ENCODE measurements at regions of chr17 and their contacts with region 1.

Region 1: GRCh38 chr17:8001976-8002720 is at the start of gene GUCY2D:
- DNase-seq: no peak
- H3K4me3 ChIP-seq: no peak within 1 kb of the TSS
- H3K27ac ChIP-seq: no peak within 1 kb of the TSS
- H3K4me1 ChIP-seq: peaks cover 3% of the 10 kb centered on the region; the same call in 1 of the 2 replicates
- H3K27me3 ChIP-seq: 0 out of 2 replicates have a peak, but pooled peaks cover 3% of the 10 kb centered on the region
- CTCF ChIP-seq: no peak
- total RNA-seq, gene GUCY2D: 0.79 TPM in 1 of 2 replicates, not detected in the other

Region 2: DNA sequence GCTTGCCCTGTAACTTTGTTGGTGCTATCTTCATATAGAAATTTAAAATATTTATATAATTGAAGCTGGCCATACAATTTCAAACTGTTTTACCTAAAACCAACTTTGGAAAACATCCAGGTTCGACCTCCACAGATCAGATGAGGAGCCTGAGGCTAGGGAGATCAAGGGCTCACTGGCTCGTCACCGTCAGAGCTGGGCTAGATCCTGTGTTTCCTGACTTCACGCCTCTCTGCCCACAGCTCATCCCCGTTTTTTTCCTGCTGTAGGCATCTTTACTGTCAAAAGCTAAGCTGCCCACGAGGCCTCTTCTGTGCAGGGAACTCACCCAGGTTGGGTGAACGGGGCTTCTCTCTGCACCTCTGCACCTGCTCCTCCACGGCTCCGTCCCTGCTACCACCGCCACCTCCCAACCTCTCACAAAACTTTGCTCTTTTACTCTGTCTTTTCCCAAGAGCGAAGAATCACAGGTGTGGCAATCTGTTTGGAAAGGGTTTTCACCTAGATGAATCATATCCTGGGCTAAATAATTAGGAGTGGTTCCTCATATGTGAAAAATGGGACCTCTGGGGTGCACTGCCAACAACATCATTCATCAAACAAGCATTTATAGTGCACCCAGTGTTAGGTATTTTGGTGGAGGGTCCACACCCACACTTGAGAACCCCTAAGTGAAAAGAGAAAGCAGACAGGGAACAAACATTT is 192.9 kb before region 1 on chr17:
- CTCF ChIA-PET with region 1: no interaction called
- POLR2A ChIA-PET with region 1: interaction called, 20 read pairs
- intact Hi-C with region 1: no loop called
- DNase-seq: peak; percentile 48 to 87
- H3K4me3 ChIP-seq: peak overlapping the region; percentile 39; the same call in 1 of the 2 replicates
- H3K27ac ChIP-seq: peak overlapping the region; percentile 95
- H3K4me1 ChIP-seq: peaks cover 43% of the 10 kb centered on the region
- H3K27me3 ChIP-seq: no peaks in the 10 kb centered on the region
- CTCF ChIP-seq: no peak

Measured in PC-9 (cell line).